ENCODE measurements at regions of chr18 and their contacts with region 1.

Region 1: DNA sequence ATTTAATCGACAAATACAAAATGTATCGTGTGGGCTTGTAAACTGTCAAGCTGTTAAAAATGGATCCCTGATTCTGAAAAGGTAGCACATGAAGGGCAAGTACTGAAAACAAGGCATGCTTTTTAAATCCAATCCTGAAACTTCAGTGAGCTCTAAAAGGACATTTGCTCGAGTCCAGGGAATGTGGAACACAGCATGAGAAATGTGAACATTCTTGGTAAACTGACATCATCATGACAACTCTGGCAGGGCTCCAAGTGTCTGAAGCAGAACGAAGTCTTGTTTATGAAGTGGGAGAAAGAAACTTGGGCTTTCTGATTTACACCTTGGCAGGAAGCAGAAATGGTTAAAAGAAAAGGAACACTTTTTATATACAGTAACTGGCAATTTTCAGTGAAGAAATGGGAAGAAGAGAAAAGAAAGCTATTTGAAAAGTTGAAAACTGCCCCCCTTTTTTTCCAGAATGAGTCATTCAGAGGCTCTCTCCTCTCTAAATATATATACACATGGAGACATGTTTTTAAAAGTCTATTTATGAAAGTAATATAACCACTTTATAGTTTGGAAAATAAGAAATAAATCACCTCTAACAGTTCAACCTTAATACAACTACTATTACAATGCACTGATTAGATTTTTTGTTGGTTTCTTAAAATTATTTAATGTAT is 120.8 kb downstream of the GAREM1 start:
- DNase-seq: peak; percentile 95
- H3K4me3 ChIP-seq: peak overlapping the region in 1 of 3 experiments; percentile 10
- H3K27ac ChIP-seq: peak overlapping the region; percentile 83
- H3K4me1 ChIP-seq: peaks cover 11% of the 10 kb centered on the region
- H3K27me3 ChIP-seq: no peaks in the 10 kb centered on the region
- CTCF ChIP-seq: no peak
- POLR2A ChIP-seq: no peak

Region 2: GRCh38 chr18:32308493-32309120 is 41.3 kb before region 1 on chr18:
- CTCF ChIA-PET with region 1: interaction called, 3 read pairs
- POLR2A ChIA-PET with region 1: no interaction called
- dilution Hi-C with region 1: no loop called
- intact Hi-C with region 1: loop called (anchors 2 kb)
- DNase-seq: peak; percentile 81
- H3K4me3 ChIP-seq: no peak overlapping the region
- H3K27ac ChIP-seq: no peak overlapping the region
- H3K4me1 ChIP-seq: peaks cover 7% of the 10 kb centered on the region
- H3K27me3 ChIP-seq: peaks cover 0 to 2% of the 10 kb centered on the region in 2 experiments
- CTCF ChIP-seq: no peak
- POLR2A ChIP-seq: no peak

Region 3: GRCh38 chr18:32383050-32383819 is 33.4 kb after region 1 on chr18:
- CTCF ChIA-PET with region 1: interaction called, 4 read pairs
- POLR2A ChIA-PET with region 1: no interaction called
- dilution Hi-C with region 1: no loop called
- intact Hi-C with region 1: loop called (anchors 2 kb)
- DNase-seq: peak; percentile 99
- H3K4me3 ChIP-seq: no peak overlapping the region
- H3K27ac ChIP-seq: peak overlapping the region; percentile 85
- H3K4me1 ChIP-seq: peaks cover 30% of the 10 kb centered on the region
- H3K27me3 ChIP-seq: no peaks in the 10 kb centered on the region
- CTCF ChIP-seq: no peak
- POLR2A ChIP-seq: no peak